ENCODE measurements at regions of chr15 and their contacts with region 1.

Region 1: GRCh38 chr15:89129123-89129815 is 41.0 kb downstream of the ABHD2 start:
- DNase-seq: peak; percentile 78
- H3K4me3 Mint-ChIP-seq: no peak overlapping the region
- H3K27ac Mint-ChIP-seq: no peak overlapping the region
- H3K4me1 Mint-ChIP-seq: peaks cover 35% of the 10 kb centered on the region
- H3K27me3 Mint-ChIP-seq: no peaks in the 10 kb centered on the region
- CTCF ChIP-seq: peak; percentile 79

Region 2: GRCh38 chr15:89068325-89068784 is 60.9 kb before region 1 on chr15:
- CTCF ChIA-PET with region 1: interaction called, 3 read pairs
- intact Hi-C with region 1: loop called (anchors 2 kb)
- DNase-seq: peak; percentile 45
- H3K4me3 Mint-ChIP-seq: no peak overlapping the region
- H3K27ac Mint-ChIP-seq: peak overlapping the region; percentile 88
- H3K4me1 Mint-ChIP-seq: peaks cover 61% of the 10 kb centered on the region
- H3K27me3 Mint-ChIP-seq: no peaks in the 10 kb centered on the region
- CTCF ChIP-seq: no peak

Region 3: DNA sequence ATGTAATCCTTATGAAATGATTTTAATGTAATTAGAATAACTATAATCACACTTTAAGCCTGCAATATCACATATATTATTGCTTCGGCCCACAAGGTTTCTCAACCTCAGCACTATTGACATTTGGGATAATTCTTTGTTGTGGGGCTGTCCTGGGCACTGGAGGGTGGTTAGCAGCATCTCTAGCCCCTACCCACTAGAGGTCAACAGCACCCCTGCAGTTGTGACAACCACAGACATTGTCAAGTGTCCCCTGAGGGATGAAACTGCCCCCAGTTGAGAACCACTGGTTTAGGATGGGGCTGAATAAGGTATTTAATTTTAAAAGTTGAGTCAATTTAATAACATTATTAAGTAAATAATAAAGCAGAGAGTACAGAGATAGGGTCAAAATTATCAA is 47.4 kb before region 1 on chr15:
- CTCF ChIA-PET with region 1: no interaction called
- intact Hi-C with region 1: no loop called
- DNase-seq: no peak
- H3K4me3 Mint-ChIP-seq: no peak overlapping the region
- H3K27ac Mint-ChIP-seq: no peak overlapping the region
- H3K4me1 Mint-ChIP-seq: peaks cover 8% of the 10 kb centered on the region
- H3K27me3 Mint-ChIP-seq: no peaks in the 10 kb centered on the region
- CTCF ChIP-seq: no peak

Region 4: DNA sequence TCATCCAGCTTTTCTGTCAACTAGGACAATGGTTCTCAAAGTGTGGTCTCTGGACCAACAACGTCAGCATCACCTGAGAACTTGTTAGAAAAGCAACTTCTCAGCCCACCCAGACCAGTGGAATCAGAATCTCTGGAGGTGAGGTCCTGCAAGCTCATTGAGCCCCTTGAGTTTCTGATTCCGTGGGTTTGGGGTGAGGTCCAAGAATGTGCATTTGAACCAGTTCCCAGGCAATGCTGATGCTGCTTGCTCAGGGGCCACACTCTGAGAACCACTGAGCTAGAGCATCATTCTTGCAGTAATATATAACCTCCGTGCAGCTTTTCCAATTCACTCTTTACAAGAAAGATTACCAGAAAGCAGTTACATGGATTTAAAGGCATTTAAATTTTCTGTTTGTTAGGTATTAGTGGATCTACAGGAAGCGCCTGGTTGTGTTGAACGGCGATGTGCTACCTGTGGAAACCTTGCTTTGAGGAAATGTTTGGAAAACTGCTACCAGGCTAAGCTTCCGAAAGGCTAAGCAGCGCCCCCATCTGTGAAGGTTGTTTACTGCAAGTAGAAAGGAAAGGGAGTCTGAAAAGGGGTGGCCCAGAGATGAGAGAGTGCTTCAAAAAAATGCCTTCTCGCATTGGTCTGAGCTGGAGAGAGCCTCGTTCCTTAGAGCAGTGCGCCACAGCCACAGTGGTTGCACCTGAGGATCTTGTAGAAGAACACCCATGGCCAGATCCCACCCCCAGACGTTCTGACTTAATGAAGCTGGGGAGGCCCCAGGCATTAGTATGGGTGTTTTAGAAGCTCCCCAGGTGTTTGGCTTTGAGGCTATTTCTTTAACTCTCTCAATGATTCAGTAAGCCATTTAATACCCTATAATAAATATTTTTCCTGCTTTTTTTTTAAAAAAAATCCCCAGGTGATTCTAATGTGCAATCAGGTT is 42.1 kb after region 1 on chr15:
- CTCF ChIA-PET with region 1: interaction called, 6 read pairs
- intact Hi-C with region 1: loop called (anchors 5 kb)
- DNase-seq: peak; percentile 80
- H3K4me3 Mint-ChIP-seq: no peak overlapping the region
- H3K27ac Mint-ChIP-seq: no peak overlapping the region
- H3K4me1 Mint-ChIP-seq: peaks cover 35% of the 10 kb centered on the region
- H3K27me3 Mint-ChIP-seq: no peaks in the 10 kb centered on the region
- CTCF ChIP-seq: peak; percentile 81

Region 5: DNA sequence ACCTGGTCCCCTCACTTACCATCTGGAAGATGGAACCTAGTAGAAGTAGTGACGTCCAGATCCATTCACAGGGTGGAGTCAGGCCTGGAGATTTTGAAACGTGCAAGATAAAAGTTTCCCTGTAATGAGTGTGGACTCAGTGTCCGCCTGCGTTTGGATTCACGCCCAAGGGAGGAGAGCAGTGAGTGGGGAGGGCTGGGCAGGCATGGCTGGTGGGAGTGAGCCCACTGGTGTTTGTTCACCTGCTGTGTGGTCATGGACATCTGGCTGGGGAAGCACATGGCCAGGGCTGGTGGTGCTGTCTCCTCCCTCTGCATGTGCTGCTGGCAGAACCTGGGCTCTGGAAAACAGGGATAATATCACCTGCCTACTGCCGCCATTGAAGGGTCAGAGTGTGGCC is 55.1 kb after region 1 on chr15:
- CTCF ChIA-PET with region 1: no interaction called
- intact Hi-C with region 1: no loop called
- DNase-seq: no peak
- H3K4me3 Mint-ChIP-seq: no peak overlapping the region
- H3K27ac Mint-ChIP-seq: no peak overlapping the region
- H3K4me1 Mint-ChIP-seq: no peaks in the 10 kb centered on the region
- H3K27me3 Mint-ChIP-seq: no peaks in the 10 kb centered on the region
- CTCF ChIP-seq: no peak

Region 6: DNA sequence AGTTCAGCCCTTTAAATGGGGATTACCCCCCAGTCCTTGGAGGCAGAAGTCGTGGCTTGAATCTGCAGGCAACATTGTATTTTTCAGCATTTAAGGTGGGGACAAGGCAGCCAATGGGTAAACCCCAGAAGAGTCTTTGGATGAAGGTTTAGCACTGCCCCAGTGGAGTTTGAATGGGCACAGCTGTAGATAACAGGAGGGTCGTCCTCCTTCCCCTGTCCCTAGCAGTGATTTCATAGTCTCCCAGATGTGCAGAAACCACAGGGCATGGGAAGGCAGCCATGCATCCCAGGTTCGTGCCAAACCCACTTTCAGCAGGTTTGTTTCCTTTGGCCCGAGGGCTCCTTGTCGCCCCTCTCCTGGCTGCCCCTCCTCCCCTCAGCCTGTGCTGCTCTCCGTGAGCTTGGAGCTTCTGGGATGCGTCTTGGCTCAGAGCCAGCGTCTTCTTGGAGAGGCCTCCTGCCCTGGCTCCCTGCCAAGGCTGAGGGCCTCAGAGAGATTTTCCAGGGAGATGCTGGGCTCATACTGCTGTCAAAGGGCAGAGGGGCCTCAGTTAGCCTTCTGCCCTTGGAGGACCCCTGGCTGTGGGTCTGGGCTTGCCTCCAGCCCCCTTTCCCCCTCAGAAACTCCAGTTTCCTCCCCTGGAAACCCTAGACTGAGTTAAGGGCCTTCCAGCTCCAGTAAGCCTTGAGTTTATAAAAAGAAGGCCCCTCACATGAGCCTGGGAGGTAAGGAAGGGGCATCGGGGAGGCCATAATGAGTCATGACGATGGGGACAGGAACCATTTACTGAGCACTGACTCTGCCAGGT is 254.3 kb after region 1 on chr15:
- CTCF ChIA-PET with region 1: no interaction called
- intact Hi-C with region 1: no loop called
- DNase-seq: peak; percentile 48
- H3K4me3 Mint-ChIP-seq: no peak overlapping the region
- H3K27ac Mint-ChIP-seq: no peak overlapping the region
- H3K4me1 Mint-ChIP-seq: peaks cover 11% of the 10 kb centered on the region
- H3K27me3 Mint-ChIP-seq: peaks cover 93% of the 10 kb centered on the region
- CTCF ChIP-seq: no peak

Measured in Calu3 (cell line).